CD14-positive monocyte (primary cell): ENCODE measurements at regions of chr15 and their contacts with region 1.

Region 1: GRCh38 chr15:77974098-77974414 is 103.5 kb downstream of the TBC1D2B start:
- DNase-seq: no peak
- H3K4me3 ChIP-seq: no peak overlapping the region
- H3K4me3 Mint-ChIP-seq: no peak overlapping the region
- H3K27ac ChIP-seq: no peak overlapping the region
- H3K27ac Mint-ChIP-seq: peak overlapping the region in 1 of 7 donors; percentile 36
- H3K4me1 ChIP-seq: no peaks in the 10 kb centered on the region
- H3K4me1 Mint-ChIP-seq: no peaks in the 10 kb centered on the region
- H3K27me3 ChIP-seq: peaks cover 0 to 2% of the 10 kb centered on the region in 2 donors
- H3K27me3 Mint-ChIP-seq: peaks cover 8 to 14% (median 8%) of the 10 kb centered on the region in 3 donors
- CTCF ChIP-seq: no peak

Region 2: DNA sequence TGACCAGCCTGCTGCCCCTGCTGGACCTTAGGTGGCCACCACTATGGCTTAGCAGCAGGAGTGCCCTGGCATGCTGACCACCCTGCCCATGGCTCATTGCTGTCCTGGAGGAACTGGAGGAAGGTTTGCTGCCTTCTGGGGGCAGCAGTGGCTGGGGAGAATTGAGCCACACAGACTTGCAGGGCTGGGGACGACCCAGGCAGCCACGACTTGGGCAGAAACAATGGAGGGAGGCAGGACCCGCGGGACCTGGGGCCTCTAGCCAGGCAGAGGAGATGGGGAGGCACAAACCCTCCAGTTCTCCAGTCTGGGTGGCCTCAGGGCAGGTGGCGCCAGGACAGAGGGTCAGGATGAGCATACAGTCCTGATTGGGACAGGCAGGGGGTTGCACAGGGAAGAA is 804.4 kb after region 1 on chr15:
- intact Hi-C with region 1: loop called in 1 of 2 experiments (anchors 10 kb)
- DNase-seq: no peak
- H3K4me3 ChIP-seq: no peak overlapping the region
- H3K4me3 Mint-ChIP-seq: no peak overlapping the region
- H3K27ac ChIP-seq: no peak overlapping the region
- H3K27ac Mint-ChIP-seq: no peak overlapping the region
- H3K4me1 ChIP-seq: no peaks in the 10 kb centered on the region
- H3K4me1 Mint-ChIP-seq: no peaks in the 10 kb centered on the region
- H3K27me3 ChIP-seq: no peaks in the 10 kb centered on the region
- H3K27me3 Mint-ChIP-seq: peaks cover 6 to 13% (median 6%) of the 10 kb centered on the region in 3 donors
- CTCF ChIP-seq: no peak